ENCODE measurements at regions of chr9 and their contacts with region 1.

Region 1: GRCh38 chr9:133658442-133659431 is 22.6 kb downstream of the DBH start:
- DNase-seq: peak in 1 of 9 donors; percentile 12
- ATAC-seq: no peak
- H3K4me3 ChIP-seq: peak overlapping the region; percentile 17
- H3K4me3 Mint-ChIP-seq: peak overlapping the region in 9 of 10 donors; percentile 74 to 82 (median 76)
- H3K27ac ChIP-seq: no peak overlapping the region
- H3K27ac Mint-ChIP-seq: peak overlapping the region in 8 of 9 donors; percentile 36 to 91 (median 81)
- H3K4me1 ChIP-seq: peaks cover 0 to 42% of the 10 kb centered on the region in 2 donors
- H3K4me1 Mint-ChIP-seq: peaks cover 2 to 51% (median 43%) of the 10 kb centered on the region in 7 donors
- H3K27me3 ChIP-seq: no peaks in the 10 kb centered on the region
- H3K27me3 Mint-ChIP-seq: peaks cover 0 to 48% (median 0%) of the 10 kb centered on the region in 5 donors

Region 2: GRCh38 chr9:133396952-133397351 is 261.8 kb before region 1 on chr9:
- CTCF ChIA-PET with region 1: no interaction called
- POLR2A ChIA-PET with region 1: no interaction called
- intact Hi-C with region 1: no loop called
- DNase-seq: no peak
- ATAC-seq: no peak
- H3K4me3 ChIP-seq: no peak overlapping the region
- H3K4me3 Mint-ChIP-seq: no peak overlapping the region
- H3K27ac ChIP-seq: no peak overlapping the region
- H3K27ac Mint-ChIP-seq: peak overlapping the region in 2 of 9 donors; percentile 22 to 46
- H3K4me1 ChIP-seq: no peaks in the 10 kb centered on the region
- H3K4me1 Mint-ChIP-seq: peaks cover 0 to 3% (median 0%) of the 10 kb centered on the region in 7 donors
- H3K27me3 ChIP-seq: no peaks in the 10 kb centered on the region
- H3K27me3 Mint-ChIP-seq: no peaks in the 10 kb centered on the region

Region 3: GRCh38 chr9:133459476-133460404 is 199.0 kb before region 1 on chr9 and contains the start of gene CACFD1:
- CTCF ChIA-PET with region 1: no interaction called
- POLR2A ChIA-PET with region 1: no interaction called
- intact Hi-C with region 1: no loop called
- DNase-seq: peak; percentile 81 to 91 (median 85)
- ATAC-seq: peak; percentile 87
- H3K4me3 ChIP-seq: peak within 1 kb of the TSS; percentile 88
- H3K4me3 Mint-ChIP-seq: peak within 1 kb of the TSS; percentile 88 to 94 (median 90)
- H3K27ac ChIP-seq: peak within 1 kb of the TSS; percentile 79
- H3K27ac Mint-ChIP-seq: peak within 1 kb of the TSS; percentile 54 to 94 (median 92)
- H3K4me1 ChIP-seq: peaks cover 6% of the 10 kb centered on the region in 2 donors
- H3K4me1 Mint-ChIP-seq: peaks cover 0 to 7% (median 4%) of the 10 kb centered on the region in 7 donors
- H3K27me3 ChIP-seq: no peaks in the 10 kb centered on the region
- H3K27me3 Mint-ChIP-seq: peaks cover 0 to 10% (median 0%) of the 10 kb centered on the region in 5 donors
- total RNA-seq, gene CACFD1: 0.56 to 4.7 (median 3.1) TPM

Region 4: GRCh38 chr9:133677126-133678010 is 18.6 kb after region 1 on chr9:
- CTCF ChIA-PET with region 1: interaction called, 3 read pairs
- POLR2A ChIA-PET with region 1: interaction called, 19 read pairs
- intact Hi-C with region 1: loop called in 1 of 2 experiments (anchors 1 kb)
- DNase-seq: peak; percentile 34 to 93 (median 90)
- ATAC-seq: peak; percentile 97
- H3K4me3 ChIP-seq: peak overlapping the region; percentile 6
- H3K4me3 Mint-ChIP-seq: peak overlapping the region; percentile 27 to 84 (median 74)
- H3K27ac ChIP-seq: peak overlapping the region; percentile 84
- H3K27ac Mint-ChIP-seq: peak overlapping the region; percentile 88 to 100 (median 99)
- H3K4me1 ChIP-seq: peaks cover 29 to 45% of the 10 kb centered on the region in 2 donors
- H3K4me1 Mint-ChIP-seq: peaks cover 32 to 65% (median 51%) of the 10 kb centered on the region in 7 donors
- H3K27me3 ChIP-seq: no peaks in the 10 kb centered on the region
- H3K27me3 Mint-ChIP-seq: no peaks in the 10 kb centered on the region

Region 5: GRCh38 chr9:133701862-133702797 is 43.4 kb after region 1 on chr9:
- CTCF ChIA-PET with region 1: interaction called, 6 read pairs
- POLR2A ChIA-PET with region 1: interaction called, 39 read pairs
- intact Hi-C with region 1: loop called (anchors 1 to 5 kb)
- DNase-seq: peak; percentile 46 to 85 (median 80)
- ATAC-seq: peak; percentile 85
- H3K4me3 ChIP-seq: peak overlapping the region; percentile 70
- H3K4me3 Mint-ChIP-seq: peak overlapping the region; percentile 79 to 93 (median 91)
- H3K27ac ChIP-seq: peak overlapping the region; percentile 91
- H3K27ac Mint-ChIP-seq: peak overlapping the region; percentile 83 to 100 (median 99)
- H3K4me1 ChIP-seq: peaks cover 31 to 62% of the 10 kb centered on the region in 2 donors
- H3K4me1 Mint-ChIP-seq: peaks cover 29 to 85% (median 66%) of the 10 kb centered on the region in 7 donors
- H3K27me3 ChIP-seq: no peaks in the 10 kb centered on the region
- H3K27me3 Mint-ChIP-seq: peaks cover 0 to 19% (median 0%) of the 10 kb centered on the region in 5 donors

Region 6: GRCh38 chr9:133715866-133716563 is 57.3 kb after region 1 on chr9:
- CTCF ChIA-PET with region 1: interaction called, 8 read pairs
- POLR2A ChIA-PET with region 1: interaction called, 4 read pairs
- intact Hi-C with region 1: loop called in 1 of 2 experiments (anchors 1 kb)
- DNase-seq: peak in 7 of 9 donors; percentile 36 to 63 (median 47)
- ATAC-seq: peak; percentile 62
- H3K4me3 ChIP-seq: no peak overlapping the region
- H3K4me3 Mint-ChIP-seq: no peak overlapping the region
- H3K27ac ChIP-seq: no peak overlapping the region
- H3K27ac Mint-ChIP-seq: peak overlapping the region in 5 of 9 donors; percentile 66 to 93 (median 78)
- H3K4me1 ChIP-seq: peaks cover 0 to 7% of the 10 kb centered on the region in 2 donors
- H3K4me1 Mint-ChIP-seq: peaks cover 0 to 7% (median 6%) of the 10 kb centered on the region in 7 donors
- H3K27me3 ChIP-seq: no peaks in the 10 kb centered on the region
- H3K27me3 Mint-ChIP-seq: no peaks in the 10 kb centered on the region

Region 7: DNA sequence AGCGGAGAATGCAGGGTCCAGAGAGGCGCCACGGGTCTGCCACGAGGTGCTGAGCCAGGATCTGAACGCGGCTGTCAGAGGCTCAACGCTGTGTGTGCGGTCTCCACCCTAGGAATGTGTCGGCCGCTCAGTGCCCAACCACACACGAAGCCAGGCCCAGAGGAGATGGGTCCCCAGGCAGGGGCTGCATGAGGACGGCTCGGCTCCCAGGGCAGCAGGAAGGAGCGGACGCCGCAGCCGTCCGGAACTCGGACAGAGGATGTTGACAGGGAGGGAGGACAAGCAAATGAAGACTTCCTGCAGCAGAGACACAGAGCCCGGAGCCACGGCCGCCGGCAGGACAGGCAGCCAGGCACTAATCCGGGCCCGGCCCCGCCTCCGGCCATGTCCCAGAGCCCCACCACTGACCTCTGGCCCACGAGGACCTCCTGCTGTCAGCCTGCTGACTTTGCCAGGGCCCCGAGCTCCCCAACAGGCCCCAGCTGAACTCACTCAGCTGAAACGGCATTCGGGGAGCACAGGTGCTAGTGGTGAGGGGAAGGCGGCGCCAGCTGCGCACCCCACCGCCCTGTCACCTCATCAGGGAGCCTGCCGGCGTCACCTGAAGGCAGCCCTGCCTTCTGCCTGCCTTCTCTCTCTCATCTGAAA is 320.7 kb after region 1 on chr9:
- CTCF ChIA-PET with region 1: no interaction called
- POLR2A ChIA-PET with region 1: no interaction called
- intact Hi-C with region 1: no loop called
- DNase-seq: no peak
- ATAC-seq: peak; percentile 27
- H3K4me3 ChIP-seq: no peak overlapping the region
- H3K4me3 Mint-ChIP-seq: no peak overlapping the region
- H3K27ac ChIP-seq: no peak overlapping the region
- H3K27ac Mint-ChIP-seq: no peak overlapping the region
- H3K4me1 ChIP-seq: no peaks in the 10 kb centered on the region
- H3K4me1 Mint-ChIP-seq: no peaks in the 10 kb centered on the region
- H3K27me3 ChIP-seq: no peaks in the 10 kb centered on the region
- H3K27me3 Mint-ChIP-seq: no peaks in the 10 kb centered on the region

Measured in naive thymus-derived CD4-positive, alpha-beta T cell (primary cell).